Calu3 (cell line): ENCODE measurements at regions of chr15 and their contacts with region 1.

Region 1: GRCh38 chr15:85618956-85619491 is 175.7 kb downstream of the KLHL25 start:
- DNase-seq: peak; percentile 58
- H3K4me3 Mint-ChIP-seq: no peak overlapping the region
- H3K27ac Mint-ChIP-seq: no peak overlapping the region
- H3K4me1 Mint-ChIP-seq: peaks cover 38% of the 10 kb centered on the region
- H3K27me3 Mint-ChIP-seq: no peaks in the 10 kb centered on the region
- CTCF ChIP-seq: no peak

Region 2: GRCh38 chr15:85597155-85597815 is 21.7 kb before region 1 on chr15:
- CTCF ChIA-PET with region 1: no interaction called
- intact Hi-C with region 1: loop called (anchors 2 kb)
- DNase-seq: no peak
- H3K4me3 Mint-ChIP-seq: no peak overlapping the region
- H3K27ac Mint-ChIP-seq: no peak overlapping the region
- H3K4me1 Mint-ChIP-seq: peaks cover 25% of the 10 kb centered on the region
- H3K27me3 Mint-ChIP-seq: no peaks in the 10 kb centered on the region
- CTCF ChIP-seq: no peak